ENCODE measurements at regions of chr4 and their contacts with region 1.

Region 1: DNA sequence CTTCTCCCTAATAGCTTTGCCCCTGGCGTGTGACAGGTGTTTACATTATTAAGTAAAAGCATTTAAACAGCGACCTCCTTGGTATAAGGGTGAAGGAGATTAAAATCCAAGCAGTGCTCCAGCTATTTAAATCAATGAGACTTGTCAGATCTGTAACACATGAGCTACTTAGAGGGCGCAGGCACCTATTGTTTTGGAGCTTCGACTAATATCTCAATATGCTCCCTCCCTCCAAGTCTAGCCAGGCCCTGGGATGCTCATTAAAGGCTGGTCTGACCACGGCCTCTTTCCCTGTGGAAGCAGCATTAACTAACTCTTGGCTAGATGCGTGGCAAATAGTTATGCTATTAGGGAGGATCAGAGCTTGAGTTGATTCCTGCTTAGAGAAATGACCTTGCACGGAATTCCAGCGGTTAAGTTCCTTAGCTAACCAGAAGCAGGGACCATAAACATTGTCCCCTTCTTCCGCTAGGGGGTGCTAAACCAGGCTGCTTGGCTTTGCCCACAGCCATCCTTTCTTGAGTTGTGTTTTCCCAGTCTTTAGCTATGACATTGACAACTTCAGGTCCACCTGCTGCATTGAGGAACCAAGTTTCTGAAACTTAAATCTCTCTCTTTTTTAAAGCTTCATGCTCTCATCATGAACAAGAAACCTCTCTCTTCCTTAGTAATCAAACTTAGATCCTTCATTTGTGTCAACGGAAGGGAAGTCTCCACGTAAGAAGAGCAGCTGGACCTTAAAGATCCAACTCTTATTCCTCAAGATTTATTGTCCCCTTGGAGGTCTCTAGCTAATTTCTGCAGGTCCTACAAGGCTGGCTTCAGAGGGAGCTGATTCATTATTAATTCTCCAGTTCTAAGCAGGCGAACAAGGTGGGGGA is 80.7 kb upstream of the IGFBP7 start:
- DNase-seq: no peak
- H3K4me3 ChIP-seq: no peak overlapping the region
- H3K27ac ChIP-seq: no peak overlapping the region
- H3K4me1 ChIP-seq: peaks cover 0 to 13% (median 0%) of the 10 kb centered on the region in 4 donors
- H3K27me3 ChIP-seq: no peaks in the 10 kb centered on the region
- CTCF ChIP-seq: peak in 1 of 2 experiments; percentile 39

Region 2: GRCh38 chr4:56863441-56864139 is 327.3 kb before region 1 on chr4:
- intact Hi-C with region 1: no loop called
- DNase-seq: no peak
- H3K4me3 ChIP-seq: no peak overlapping the region
- H3K27ac ChIP-seq: no peak overlapping the region
- H3K4me1 ChIP-seq: peaks cover 0 to under 1% (median 0%) of the 10 kb centered on the region in 4 donors
- H3K27me3 ChIP-seq: no peaks in the 10 kb centered on the region
- CTCF ChIP-seq: no peak

Region 3: DNA sequence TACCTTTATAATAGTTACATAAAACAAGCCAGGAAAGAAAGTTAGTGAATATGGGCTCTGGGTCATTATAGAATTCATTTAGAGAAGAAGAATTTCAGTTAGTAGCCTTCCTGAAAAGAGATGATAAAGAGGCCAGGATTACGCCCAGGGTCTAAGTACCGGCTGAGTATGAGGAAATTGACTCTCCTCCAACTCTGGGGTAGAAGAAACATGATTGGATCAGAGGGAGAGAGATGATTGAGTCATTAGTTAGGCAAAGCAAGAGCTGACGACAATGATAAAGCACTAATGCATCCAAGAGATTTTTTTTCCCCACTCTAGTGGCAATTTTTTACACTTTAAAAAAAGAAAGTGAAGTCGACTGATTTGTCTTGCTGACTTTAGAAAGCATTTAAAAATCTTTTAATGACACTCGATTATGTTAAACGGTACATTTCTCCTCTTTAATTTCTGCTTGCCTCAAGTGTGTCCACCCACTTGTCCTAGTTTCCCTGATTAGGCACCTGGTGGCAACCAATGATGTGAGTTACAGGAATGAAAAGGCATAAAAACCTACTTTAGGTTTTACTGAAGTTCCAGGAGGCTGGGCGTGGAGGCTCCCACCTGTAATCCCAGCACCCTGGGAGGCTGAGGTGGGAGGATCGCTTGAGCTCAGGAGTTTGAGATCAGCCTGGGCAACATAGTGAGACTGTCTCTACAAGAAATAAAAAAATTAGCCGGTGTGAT is 43.3 kb before region 1 on chr4:
- intact Hi-C with region 1: loop called (anchors 2 kb)
- DNase-seq: no peak
- H3K4me3 ChIP-seq: no peak overlapping the region
- H3K27ac ChIP-seq: no peak overlapping the region
- H3K4me1 ChIP-seq: peaks cover 0 to 7% (median 0%) of the 10 kb centered on the region in 4 donors
- H3K27me3 ChIP-seq: no peaks in the 10 kb centered on the region
- CTCF ChIP-seq: no peak

Region 4: GRCh38 chr4:57333684-57334083 is 142.8 kb after region 1 on chr4:
- intact Hi-C with region 1: loop called (anchors 10 kb)
- DNase-seq: no peak
- H3K4me3 ChIP-seq: no peak overlapping the region
- H3K27ac ChIP-seq: no peak overlapping the region
- H3K4me1 ChIP-seq: no peaks in the 10 kb centered on the region
- H3K27me3 ChIP-seq: no peaks in the 10 kb centered on the region
- CTCF ChIP-seq: no peak

Measured in tibial artery (tissue), 4 donors.